Activated CD4-positive, alpha-beta T cell treated with anti-CD3 and anti-CD28 coated beads for 36 hours (primary cell): ENCODE measurements at regions of chr19 and their contacts with region 1.

Region 1: DNA sequence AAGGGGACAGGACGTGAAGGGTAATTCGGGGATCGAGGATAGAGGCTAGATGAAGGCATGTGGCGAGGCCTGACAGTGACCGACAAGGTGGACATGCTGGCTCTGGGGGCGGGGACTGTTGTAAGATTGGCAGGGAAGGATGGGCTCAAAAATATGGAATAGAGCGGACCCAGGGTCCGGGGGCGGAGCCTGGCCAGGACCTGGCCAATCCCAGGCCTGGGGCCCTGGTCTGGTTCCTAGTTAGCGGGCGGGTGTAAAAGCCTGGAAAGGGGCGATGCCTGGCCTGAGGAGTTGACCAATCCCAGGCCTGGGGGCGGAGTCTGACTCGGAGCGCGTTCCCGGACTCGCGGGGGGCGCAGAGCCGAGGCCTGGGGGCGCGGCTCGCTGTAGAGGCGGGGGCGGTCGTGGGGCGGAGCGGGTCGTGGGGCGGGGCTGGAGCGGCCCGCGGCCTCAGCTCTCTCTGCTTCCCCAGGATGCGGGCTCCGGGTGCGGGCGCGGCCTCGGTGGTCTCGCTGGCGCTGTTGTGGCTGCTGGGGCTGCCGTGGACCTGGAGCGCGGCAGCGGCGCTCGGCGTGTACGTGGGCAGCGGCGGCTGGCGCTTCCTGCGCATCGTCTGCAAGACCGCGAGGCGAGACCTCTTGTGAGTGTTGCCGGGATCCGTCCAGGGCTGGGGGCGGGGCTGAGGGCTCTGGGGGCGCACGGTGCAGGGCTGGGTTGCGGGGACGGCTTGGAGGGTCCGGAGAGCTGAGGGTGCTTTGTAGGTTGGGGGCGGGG is at the start of gene SLC27A1:
- DNase-seq: peak; percentile 93
- ATAC-seq: peak; percentile 90
- H3K4me3 Mint-ChIP-seq: peak within 1 kb of the TSS; percentile 86
- H3K27ac Mint-ChIP-seq: peak within 1 kb of the TSS; percentile 91
- H3K4me1 Mint-ChIP-seq: peaks cover 25% of the 10 kb centered on the region
- H3K27me3 Mint-ChIP-seq: no peaks in the 10 kb centered on the region
- total RNA-seq, gene SLC27A1: 2.2 to 2.7 TPM

Region 2: DNA sequence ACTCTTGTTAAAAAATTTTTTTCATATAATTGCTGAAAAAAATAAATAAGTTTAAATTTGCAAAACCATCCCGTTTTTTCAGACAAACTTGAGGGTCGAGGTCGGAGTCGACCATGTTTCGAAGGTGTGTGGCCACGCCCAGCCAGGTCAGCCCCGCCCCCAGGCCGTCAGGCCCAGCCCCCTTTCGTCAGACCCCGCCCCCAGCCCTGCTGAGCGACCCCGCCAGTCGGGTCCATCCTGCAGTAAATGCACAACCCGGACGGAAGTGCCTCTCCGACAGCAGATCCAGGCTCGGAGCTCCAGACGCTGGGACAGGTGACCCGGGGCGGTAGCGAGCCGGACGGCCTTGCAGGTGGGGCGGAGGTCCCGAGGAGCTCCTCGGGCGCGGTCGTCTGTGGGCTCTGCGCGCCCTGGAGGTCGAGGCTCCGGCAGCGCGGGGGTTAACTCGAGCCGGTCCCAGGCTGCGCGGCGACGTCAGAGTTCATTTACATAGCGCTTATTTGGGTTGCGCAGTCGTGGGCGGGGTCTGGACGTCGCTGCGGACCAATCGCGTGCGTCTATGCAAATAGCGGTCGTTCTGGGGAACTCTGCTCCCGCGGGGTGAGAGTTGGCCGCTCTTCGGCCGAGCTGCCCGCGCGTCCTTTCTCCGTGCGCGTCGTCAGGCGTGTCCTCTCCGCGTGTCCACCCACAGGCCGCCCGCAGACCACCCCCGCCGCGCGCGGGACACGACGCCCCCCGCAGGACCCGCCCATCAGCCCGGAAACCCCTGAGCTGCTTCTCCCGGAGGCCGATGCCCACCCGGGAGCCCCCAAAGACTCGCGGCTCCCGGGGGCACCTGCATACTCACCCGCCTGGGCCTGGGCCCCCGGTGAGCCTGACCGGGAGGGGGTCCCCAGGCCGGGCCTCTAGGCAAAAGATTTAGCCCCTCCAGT is 244.0 kb before region 1 on chr19 and contains the start of gene OCEL1:
- CTCF ChIA-PET with region 1: no interaction called
- POLR2A ChIA-PET with region 1: no interaction called
- intact Hi-C with region 1: loop called in 1 of 2 experiments (anchors 1 kb)
- DNase-seq: peak; percentile 99
- ATAC-seq: peak; percentile 92
- H3K4me3 Mint-ChIP-seq: peak within 1 kb of the TSS; percentile 80
- H3K27ac Mint-ChIP-seq: peak within 1 kb of the TSS; percentile 93
- H3K4me1 Mint-ChIP-seq: peaks cover 7% of the 10 kb centered on the region
- H3K27me3 Mint-ChIP-seq: no peaks in the 10 kb centered on the region
- total RNA-seq, gene OCEL1: 10.9 to 11.7 TPM

Region 3: GRCh38 chr19:17305517-17306284 is 164.6 kb before region 1 on chr19 and contains the start of gene MRPL34:
- CTCF ChIA-PET with region 1: no interaction called
- POLR2A ChIA-PET with region 1: no interaction called
- intact Hi-C with region 1: loop called in 1 of 2 experiments (anchors 1 kb)
- DNase-seq: peak; percentile 97
- ATAC-seq: peak; percentile 70
- H3K4me3 Mint-ChIP-seq: peak within 1 kb of the TSS; percentile 86
- H3K27ac Mint-ChIP-seq: peak within 1 kb of the TSS; percentile 92
- H3K4me1 Mint-ChIP-seq: peaks cover 46% of the 10 kb centered on the region
- H3K27me3 Mint-ChIP-seq: no peaks in the 10 kb centered on the region
- total RNA-seq, gene MRPL34: 72.0 to 88.6 TPM

Region 4: GRCh38 chr19:17390665-17391370 is 79.4 kb before region 1 on chr19:
- CTCF ChIA-PET with region 1: interaction called, 4 read pairs
- POLR2A ChIA-PET with region 1: no interaction called
- intact Hi-C with region 1: loop called (anchors 1 to 5 kb)
- DNase-seq: peak; percentile 97
- ATAC-seq: peak; percentile 98
- H3K4me3 Mint-ChIP-seq: peak overlapping the region; percentile 83
- H3K27ac Mint-ChIP-seq: peak overlapping the region; percentile 33
- H3K4me1 Mint-ChIP-seq: peaks cover 24% of the 10 kb centered on the region
- H3K27me3 Mint-ChIP-seq: peaks cover 4% of the 10 kb centered on the region

Region 5: GRCh38 chr19:17448131-17448967 is 21.9 kb before region 1 on chr19 and contains the start of gene TMEM221:
- CTCF ChIA-PET with region 1: interaction called, 8 read pairs
- POLR2A ChIA-PET with region 1: no interaction called
- intact Hi-C with region 1: loop called (anchors 1 to 2 kb)
- DNase-seq: peak; percentile 77
- ATAC-seq: peak; percentile 57
- H3K4me3 Mint-ChIP-seq: no peak within 1 kb of the TSS
- H3K27ac Mint-ChIP-seq: no peak within 1 kb of the TSS
- H3K4me1 Mint-ChIP-seq: peaks cover 16% of the 10 kb centered on the region
- H3K27me3 Mint-ChIP-seq: peaks cover 14% of the 10 kb centered on the region
- total RNA-seq, gene TMEM221: not detected

Region 6: GRCh38 chr19:17526922-17527321 is 56.7 kb after region 1 on chr19:
- CTCF ChIA-PET with region 1: no interaction called
- POLR2A ChIA-PET with region 1: no interaction called
- intact Hi-C with region 1: no loop called
- DNase-seq: peak; percentile 49
- ATAC-seq: peak; percentile 31
- H3K4me3 Mint-ChIP-seq: no peak overlapping the region
- H3K27ac Mint-ChIP-seq: no peak overlapping the region
- H3K4me1 Mint-ChIP-seq: peaks cover 22% of the 10 kb centered on the region
- H3K27me3 Mint-ChIP-seq: no peaks in the 10 kb centered on the region

Region 7: GRCh38 chr19:17555480-17555928 is 85.2 kb after region 1 on chr19 and contains the start of gene COLGALT1:
- CTCF ChIA-PET with region 1: interaction called, 5 read pairs
- POLR2A ChIA-PET with region 1: no interaction called
- intact Hi-C with region 1: loop called in 1 of 2 experiments (anchors 1 kb)
- DNase-seq: peak; percentile 100
- ATAC-seq: peak; percentile 96
- H3K4me3 Mint-ChIP-seq: peak within 1 kb of the TSS; percentile 82
- H3K27ac Mint-ChIP-seq: peak within 1 kb of the TSS; percentile 67
- H3K4me1 Mint-ChIP-seq: peaks cover 21% of the 10 kb centered on the region
- H3K27me3 Mint-ChIP-seq: no peaks in the 10 kb centered on the region
- total RNA-seq, gene COLGALT1: 51.2 to 64.3 TPM

Region 8: GRCh38 chr19:17784201-17785008 is 314.1 kb after region 1 on chr19:
- CTCF ChIA-PET with region 1: no interaction called
- POLR2A ChIA-PET with region 1: no interaction called
- intact Hi-C with region 1: no loop called
- DNase-seq: peak; percentile 87
- ATAC-seq: peak; percentile 73
- H3K4me3 Mint-ChIP-seq: no peak overlapping the region
- H3K27ac Mint-ChIP-seq: no peak overlapping the region
- H3K4me1 Mint-ChIP-seq: peaks cover 6% of the 10 kb centered on the region
- H3K27me3 Mint-ChIP-seq: no peaks in the 10 kb centered on the region

Region 9: GRCh38 chr19:17841810-17842662 is 371.8 kb after region 1 on chr19:
- CTCF ChIA-PET with region 1: no interaction called
- POLR2A ChIA-PET with region 1: no interaction called
- intact Hi-C with region 1: loop called in 1 of 2 experiments (anchors 5 kb)
- DNase-seq: peak; percentile 90
- ATAC-seq: peak; percentile 89
- H3K4me3 Mint-ChIP-seq: no peak overlapping the region
- H3K27ac Mint-ChIP-seq: no peak overlapping the region
- H3K4me1 Mint-ChIP-seq: peaks cover 36% of the 10 kb centered on the region
- H3K27me3 Mint-ChIP-seq: no peaks in the 10 kb centered on the region